Cardiac septum (tissue), 1 donor: ENCODE measurements at regions of chr1 and their contacts with region 1.

Region 1: GRCh38 chr1:245874942-245875580 is 632.0 kb downstream of the SMYD3 start:
- DNase-seq: peak; percentile 92

Region 2: GRCh38 chr1:245790441-245790840 is 84.6 kb before region 1 on chr1:
- intact Hi-C with region 1: loop called (anchors 5 kb)
- DNase-seq: no peak

Region 3: GRCh38 chr1:245997471-245998258 is 122.6 kb after region 1 on chr1:
- intact Hi-C with region 1: loop called (anchors 2 kb)
- DNase-seq: no peak

Region 4: DNA sequence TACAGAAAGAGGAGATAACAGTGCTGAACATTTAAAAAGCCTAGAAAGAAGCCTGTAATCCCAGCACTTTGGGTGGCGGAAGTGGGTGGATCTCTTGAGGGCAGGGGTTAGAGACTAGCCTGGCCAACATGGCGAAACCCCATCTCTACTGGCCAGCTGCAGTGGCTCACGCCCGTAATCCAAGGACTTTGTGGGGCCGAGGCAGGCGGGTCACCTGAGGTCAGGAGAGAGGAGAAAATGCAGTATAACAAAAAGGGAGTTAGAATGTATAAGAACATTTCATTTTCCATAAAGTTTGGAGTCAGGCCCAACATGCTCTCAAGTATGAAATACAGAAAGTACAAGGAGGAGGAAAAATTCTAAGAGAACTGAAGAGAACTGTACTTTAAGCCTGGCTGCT is 497.5 kb after region 1 on chr1:
- intact Hi-C with region 1: no loop called
- DNase-seq: no peak